ENCODE measurements at regions of chr12 and their contacts with region 1.

Region 1: DNA sequence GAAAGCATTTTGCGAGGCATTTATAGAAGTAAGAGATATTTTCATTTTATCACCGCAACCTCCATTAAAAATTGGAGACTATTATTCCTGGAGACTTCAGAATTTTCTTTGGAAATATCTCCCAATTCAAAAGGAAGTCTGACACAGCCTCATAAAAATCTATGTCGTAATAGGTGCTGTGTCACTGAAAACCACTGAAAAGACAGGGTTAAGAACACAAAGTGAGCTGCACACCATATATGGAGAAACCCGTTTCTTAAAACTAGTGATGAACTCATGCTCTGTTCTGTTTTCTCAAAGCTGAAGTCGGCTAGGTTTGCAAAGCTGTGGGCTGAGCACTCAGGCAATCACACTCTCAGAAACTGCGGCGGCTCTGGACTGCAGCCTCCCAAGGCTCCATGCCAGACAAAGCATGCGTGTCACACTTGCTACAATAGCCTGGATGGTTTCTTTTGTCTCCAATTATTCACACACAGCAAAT is at the start of gene GLIPR1:
- DNase-seq: peak; percentile 42 to 86 (median 65)
- ATAC-seq: peak; percentile 79 to 88 (median 86)
- H3K4me3 ChIP-seq: peak within 1 kb of the TSS; percentile 69 to 71
- H3K4me3 Mint-ChIP-seq: peak within 1 kb of the TSS; percentile 96 to 98 (median 98)
- H3K27ac ChIP-seq: peak within 1 kb of the TSS; percentile 90
- H3K27ac Mint-ChIP-seq: peak within 1 kb of the TSS; percentile 95 to 98
- H3K4me1 ChIP-seq: peaks cover 32 to 46% of the 10 kb centered on the region in 2 experiments
- H3K4me1 Mint-ChIP-seq: peaks cover 78 to 80% (median 80%) of the 10 kb centered on the region in 3 donors
- H3K27me3 ChIP-seq: no peaks in the 10 kb centered on the region
- H3K27me3 Mint-ChIP-seq: no peaks in the 10 kb centered on the region
- total RNA-seq, gene GLIPR1: 42.9 to 102 (median 53.5) TPM

Region 2: DNA sequence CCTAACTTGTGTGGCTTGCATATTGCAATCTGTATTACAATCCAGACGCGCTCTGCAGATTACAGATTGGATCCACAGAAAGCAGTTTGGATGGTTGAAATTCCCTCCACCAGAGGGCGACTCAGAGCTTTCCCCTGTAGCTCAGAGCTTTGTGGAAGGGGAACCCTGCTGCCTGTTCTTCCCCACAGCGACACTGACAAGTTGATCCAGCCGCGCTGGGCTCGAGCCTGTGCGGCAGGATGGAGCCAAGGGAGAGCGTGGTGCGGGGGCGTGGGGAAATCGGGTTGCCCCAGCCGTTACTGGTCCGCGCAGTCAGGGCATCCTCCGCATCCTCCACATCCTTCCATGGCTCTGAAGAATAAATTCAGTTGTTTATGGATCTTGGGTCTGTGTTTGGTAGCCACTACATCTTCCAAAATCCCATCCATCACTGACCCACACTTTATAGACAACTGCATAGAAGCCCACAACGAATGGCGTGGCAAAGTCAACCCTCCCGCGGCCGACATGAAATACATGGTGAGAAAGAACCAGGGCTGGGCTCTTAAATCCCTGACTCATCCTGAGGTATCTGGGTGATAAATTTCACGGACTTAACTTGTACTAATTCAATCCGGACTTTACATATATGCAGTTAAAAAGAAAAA is 146.0 kb before region 1 on chr12 and contains the start of gene GLIPR1L1:
- CTCF ChIA-PET with region 1: interaction called, 5 to 11 read pairs
- POLR2A ChIA-PET with region 1: no interaction called
- DNase-seq: peak; percentile 52 to 90 (median 74)
- ATAC-seq: peak; percentile 81 to 90 (median 86)
- H3K4me3 ChIP-seq: peak within 1 kb of the TSS; percentile 28 to 45
- H3K4me3 Mint-ChIP-seq: peak within 1 kb of the TSS; percentile 55 to 71 (median 66)
- H3K27ac ChIP-seq: no peak within 1 kb of the TSS
- H3K27ac Mint-ChIP-seq: no peak within 1 kb of the TSS
- H3K4me1 ChIP-seq: peaks cover 2 to 16% of the 10 kb centered on the region in 2 experiments
- H3K4me1 Mint-ChIP-seq: peaks cover 18 to 21% (median 19%) of the 10 kb centered on the region in 3 donors
- H3K27me3 ChIP-seq: peaks cover 4 to 12% of the 10 kb centered on the region in 2 experiments
- H3K27me3 Mint-ChIP-seq: peaks cover 15 to 19% of the 10 kb centered on the region in 2 donors
- total RNA-seq, gene GLIPR1L1: not detected

Region 3: GRCh38 chr12:75404231-75404630 is 76.3 kb before region 1 on chr12:
- CTCF ChIA-PET with region 1: no interaction called
- POLR2A ChIA-PET with region 1: no interaction called
- DNase-seq: no peak
- ATAC-seq: no peak
- H3K4me3 ChIP-seq: no peak overlapping the region
- H3K4me3 Mint-ChIP-seq: no peak overlapping the region
- H3K27ac ChIP-seq: no peak overlapping the region
- H3K27ac Mint-ChIP-seq: no peak overlapping the region
- H3K4me1 ChIP-seq: no peaks in the 10 kb centered on the region
- H3K4me1 Mint-ChIP-seq: no peaks in the 10 kb centered on the region
- H3K27me3 ChIP-seq: no peaks in the 10 kb centered on the region
- H3K27me3 Mint-ChIP-seq: no peaks in the 10 kb centered on the region

Region 4: GRCh38 chr12:75437564-75437963 is 42.9 kb before region 1 on chr12:
- CTCF ChIA-PET with region 1: interaction called, 15 to 34 read pairs
- POLR2A ChIA-PET with region 1: interaction called, 3 read pairs
- DNase-seq: peak in 10 of 35 experiments; percentile 1 to 65 (median 10)
- ATAC-seq: peak; percentile 48 to 82 (median 75)
- H3K4me3 ChIP-seq: no peak overlapping the region
- H3K4me3 Mint-ChIP-seq: no peak overlapping the region
- H3K27ac ChIP-seq: no peak overlapping the region
- H3K27ac Mint-ChIP-seq: no peak overlapping the region
- H3K4me1 ChIP-seq: peaks cover 0 to 12% of the 10 kb centered on the region in 2 experiments
- H3K4me1 Mint-ChIP-seq: peaks cover 0 to 16% (median 5%) of the 10 kb centered on the region in 3 donors
- H3K27me3 ChIP-seq: peaks cover 0 to 7% of the 10 kb centered on the region in 2 experiments
- H3K27me3 Mint-ChIP-seq: peaks cover 4 to 12% of the 10 kb centered on the region in 2 donors

Region 5: DNA sequence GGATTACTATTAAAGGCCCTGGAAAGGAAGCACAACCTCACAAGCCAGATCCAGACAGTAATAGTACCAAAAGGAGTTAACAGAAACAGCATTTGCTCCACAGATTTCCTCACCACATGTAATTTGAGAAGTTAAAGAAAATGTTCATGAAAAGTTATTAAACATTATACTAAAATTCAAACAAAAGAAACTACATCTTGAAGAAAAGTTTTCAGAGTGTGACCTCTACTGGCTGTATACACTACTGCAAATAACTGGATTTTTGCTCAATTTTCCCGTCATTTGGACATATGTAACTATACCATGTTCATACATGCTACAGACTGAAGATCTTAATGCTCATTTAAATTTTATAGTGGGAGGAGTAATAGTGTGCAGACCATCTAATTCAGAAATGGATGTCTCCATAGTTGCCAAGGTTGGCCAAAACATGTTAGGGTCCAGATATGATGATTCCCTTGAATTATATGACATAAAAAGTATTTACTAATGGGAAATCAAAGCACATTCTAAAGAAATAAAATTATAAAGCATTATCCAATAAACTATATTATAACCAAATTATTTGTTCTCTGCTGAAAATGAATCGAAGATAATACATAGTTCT is 25.3 kb after region 1 on chr12:
- CTCF ChIA-PET with region 1: interaction called, 44 to 58 read pairs
- POLR2A ChIA-PET with region 1: interaction called, 11 to 12 read pairs
- DNase-seq: peak in 1 of 35 experiments; percentile 57
- ATAC-seq: peak in 3 of 4 experiments; percentile 47 to 56 (median 51)
- H3K4me3 ChIP-seq: no peak overlapping the region
- H3K4me3 Mint-ChIP-seq: no peak overlapping the region
- H3K27ac ChIP-seq: no peak overlapping the region
- H3K27ac Mint-ChIP-seq: peak overlapping the region in 1 of 2 donors; percentile 25
- H3K4me1 ChIP-seq: peaks cover 4 to 10% of the 10 kb centered on the region in 2 experiments
- H3K4me1 Mint-ChIP-seq: peaks cover 23 to 35% (median 29%) of the 10 kb centered on the region in 3 donors
- H3K27me3 ChIP-seq: no peaks in the 10 kb centered on the region
- H3K27me3 Mint-ChIP-seq: no peaks in the 10 kb centered on the region

Region 6: DNA sequence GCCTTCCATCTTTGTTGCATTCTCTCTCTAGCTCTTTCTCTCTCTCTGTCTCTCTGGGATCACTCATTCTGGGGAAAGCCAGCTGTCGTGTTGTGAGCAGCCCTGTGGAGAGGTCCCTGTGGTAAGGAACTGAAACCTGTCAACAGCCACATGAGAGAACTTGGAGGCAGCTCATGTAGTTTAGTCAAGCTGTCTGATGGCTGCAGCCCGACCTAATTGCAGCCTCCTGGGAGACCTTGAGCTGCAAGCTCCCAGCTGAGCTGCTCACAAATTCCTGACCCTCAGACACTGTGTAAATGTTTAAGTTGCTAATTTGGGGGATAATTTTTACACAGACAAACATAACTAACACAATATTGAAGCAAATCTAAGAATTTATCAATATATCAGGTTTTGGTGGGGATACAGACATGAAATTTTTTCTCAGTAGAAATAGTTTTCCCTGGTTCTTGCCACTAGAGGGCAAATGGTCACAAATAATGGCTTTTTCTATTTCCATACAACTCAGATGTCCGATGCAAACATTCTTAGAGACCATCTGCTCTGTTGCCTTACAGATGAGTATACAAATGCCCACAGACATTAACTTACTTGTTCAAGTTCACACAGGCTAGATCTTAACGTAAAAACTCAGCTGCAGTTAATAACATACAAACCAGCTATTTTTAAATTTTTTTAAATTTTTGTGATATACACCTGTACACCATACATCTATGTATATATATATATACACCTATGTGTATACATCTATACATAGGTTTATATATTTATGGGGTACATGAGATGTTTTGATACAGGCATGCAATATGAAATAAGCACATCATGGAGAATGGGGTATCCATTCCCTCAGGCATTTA is 46.4 kb after region 1 on chr12:
- CTCF ChIA-PET with region 1: interaction called, 3 to 10 read pairs
- POLR2A ChIA-PET with region 1: no interaction called
- DNase-seq: peak in 3 of 35 experiments; percentile 1 to 59 (median 5)
- ATAC-seq: peak in 1 of 4 experiments; percentile 35
- H3K4me3 ChIP-seq: no peak overlapping the region
- H3K4me3 Mint-ChIP-seq: no peak overlapping the region
- H3K27ac ChIP-seq: no peak overlapping the region
- H3K27ac Mint-ChIP-seq: no peak overlapping the region
- H3K4me1 ChIP-seq: peaks cover 0 to 3% of the 10 kb centered on the region in 2 experiments
- H3K4me1 Mint-ChIP-seq: peaks cover 0 to 3% (median 0%) of the 10 kb centered on the region in 3 donors
- H3K27me3 ChIP-seq: peaks cover 0 to 3% of the 10 kb centered on the region in 2 experiments
- H3K27me3 Mint-ChIP-seq: peaks cover 30 to 32% of the 10 kb centered on the region in 2 donors

Measured in T-cell (primary cell).